GM12878 (cell line): ENCODE measurements at regions of chr9 and their contacts with region 1.

Region 1: DNA sequence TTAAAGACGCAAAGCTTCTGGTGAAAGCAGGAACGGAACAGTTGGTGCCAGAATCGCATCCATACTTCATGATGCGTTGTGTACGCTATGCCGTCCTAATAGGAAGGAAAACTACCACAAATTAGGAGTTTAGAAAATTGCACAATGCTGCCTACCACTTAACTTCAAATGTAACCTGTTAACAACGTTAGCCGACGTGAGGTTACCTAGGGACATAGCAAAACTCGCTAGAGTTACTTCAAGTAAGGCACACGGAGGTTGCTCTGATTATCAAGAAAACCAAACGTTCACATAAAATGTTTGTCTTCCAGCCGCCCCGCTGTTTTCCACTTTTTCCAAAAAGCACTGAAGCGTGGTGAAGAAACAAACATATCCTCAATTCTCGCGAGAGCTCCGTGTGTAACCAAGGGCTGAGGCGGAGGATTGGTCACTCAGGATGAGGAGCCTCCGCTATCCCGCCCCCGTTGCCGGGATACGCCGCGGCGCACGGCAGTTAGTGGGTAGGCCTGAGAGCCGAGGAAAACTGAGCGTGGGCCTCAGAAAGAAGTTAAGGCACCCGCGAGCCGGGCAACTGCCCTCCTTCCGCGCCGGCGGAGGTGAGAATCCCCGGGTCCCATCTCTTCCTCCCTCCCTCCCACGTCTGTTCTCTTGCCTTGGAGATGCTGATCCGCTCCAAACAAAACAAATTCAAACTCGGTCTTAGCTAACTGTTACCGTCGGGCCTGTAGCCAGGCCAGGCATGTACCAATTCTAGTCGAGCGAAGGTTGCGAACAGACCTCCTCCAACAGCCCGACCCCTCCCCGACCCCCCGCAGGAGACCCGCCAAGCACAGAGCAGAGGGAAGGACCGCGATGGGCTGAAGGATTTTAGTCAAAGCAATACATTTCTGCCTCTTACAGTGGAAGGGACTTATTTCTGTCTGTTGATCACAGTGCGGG is at the start of gene IFT74:
- DNase-seq: peak; percentile 76
- ATAC-seq: peak; percentile 99
- H3K4me3 ChIP-seq: peak within 1 kb of the TSS; percentile 77
- H3K27ac ChIP-seq: peak within 1 kb of the TSS; percentile 83
- H3K4me1 ChIP-seq: no peaks in the 10 kb centered on the region
- H3K27me3 ChIP-seq: no peaks in the 10 kb centered on the region
- CTCF ChIP-seq: no peak
- EP300 ChIP-seq: no peak
- POLR2A ChIP-seq: peak; percentile 75
- RAD21 ChIP-seq: no peak
- polyA plus RNA-seq, gene IFT74: 7.9 to 9.4 TPM

Region 2: DNA sequence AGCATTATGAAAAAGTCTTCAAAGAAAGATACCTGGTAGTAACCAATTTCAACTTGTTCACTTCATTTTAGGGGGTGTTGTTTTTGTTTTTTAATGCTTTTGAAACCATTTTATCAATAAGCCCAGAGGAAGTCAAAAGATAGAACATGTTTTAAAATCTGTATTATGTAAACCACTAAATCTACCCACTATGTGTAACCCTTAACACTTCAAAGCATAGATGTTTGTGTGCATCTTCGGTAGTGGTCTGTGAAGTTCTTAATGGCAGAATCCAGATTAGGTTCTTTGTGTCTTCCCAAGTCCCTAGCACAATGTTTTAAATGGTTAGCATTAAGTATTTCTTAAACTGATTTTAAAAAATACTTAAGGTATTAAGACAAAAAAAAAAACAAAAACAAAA is 15.4 kb before region 1 on chr9:
- CTCF ChIA-PET with region 1: interaction called, 6 read pairs
- POLR2A ChIA-PET with region 1: interaction called, 25 read pairs
- RAD21 ChIA-PET with region 1: interaction called, 6 read pairs
- SMC1A ChIA-PET with region 1: interaction called, 24 read pairs
- in situ Hi-C with region 1: no loop called
- intact Hi-C with region 1: no loop called
- DNase-seq: no peak
- ATAC-seq: no peak
- H3K4me3 ChIP-seq: no peak overlapping the region
- H3K27ac ChIP-seq: no peak overlapping the region
- H3K4me1 ChIP-seq: no peaks in the 10 kb centered on the region
- H3K27me3 ChIP-seq: no peaks in the 10 kb centered on the region
- CTCF ChIP-seq: no peak
- EP300 ChIP-seq: no peak
- POLR2A ChIP-seq: no peak
- RAD21 ChIP-seq: no peak

Region 3: DNA sequence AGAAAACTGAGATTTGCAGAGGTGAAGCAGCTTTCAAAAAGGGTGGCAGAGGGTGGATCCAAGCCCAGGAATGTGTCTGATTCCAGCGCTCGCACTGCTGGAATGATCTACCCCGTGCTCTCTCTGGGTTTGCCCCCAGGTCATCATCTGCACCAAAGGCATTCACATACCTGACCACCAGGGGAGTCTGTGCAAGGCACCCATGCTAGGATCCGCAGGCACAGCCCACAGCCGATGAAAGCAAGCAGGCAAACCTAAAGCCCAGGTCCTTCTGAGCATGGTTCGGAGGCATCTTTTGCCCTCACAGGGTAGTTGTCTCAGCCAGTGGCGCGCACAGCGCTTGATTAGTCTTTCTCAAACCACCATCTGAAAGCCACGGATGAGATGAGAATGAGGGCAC is 209.5 kb after region 1 on chr9:
- CTCF ChIA-PET with region 1: no interaction called
- POLR2A ChIA-PET with region 1: no interaction called
- RAD21 ChIA-PET with region 1: no interaction called
- SMC1A ChIA-PET with region 1: no interaction called
- in situ Hi-C with region 1: no loop called
- intact Hi-C with region 1: no loop called
- DNase-seq: no peak
- ATAC-seq: peak; percentile 56; the same call in 1 of the 3 replicates
- H3K4me3 ChIP-seq: no peak overlapping the region
- H3K27ac ChIP-seq: no peak overlapping the region
- H3K4me1 ChIP-seq: no peaks in the 10 kb centered on the region
- H3K27me3 ChIP-seq: no peaks in the 10 kb centered on the region
- CTCF ChIP-seq: no peak
- EP300 ChIP-seq: no peak
- POLR2A ChIP-seq: no peak
- RAD21 ChIP-seq: no peak